Activated B cell treated with CpG ODN at 0.5 μM for 24 hours (primary cell): ENCODE measurements at regions of chr1 and their contacts with region 1.

Region 1: DNA sequence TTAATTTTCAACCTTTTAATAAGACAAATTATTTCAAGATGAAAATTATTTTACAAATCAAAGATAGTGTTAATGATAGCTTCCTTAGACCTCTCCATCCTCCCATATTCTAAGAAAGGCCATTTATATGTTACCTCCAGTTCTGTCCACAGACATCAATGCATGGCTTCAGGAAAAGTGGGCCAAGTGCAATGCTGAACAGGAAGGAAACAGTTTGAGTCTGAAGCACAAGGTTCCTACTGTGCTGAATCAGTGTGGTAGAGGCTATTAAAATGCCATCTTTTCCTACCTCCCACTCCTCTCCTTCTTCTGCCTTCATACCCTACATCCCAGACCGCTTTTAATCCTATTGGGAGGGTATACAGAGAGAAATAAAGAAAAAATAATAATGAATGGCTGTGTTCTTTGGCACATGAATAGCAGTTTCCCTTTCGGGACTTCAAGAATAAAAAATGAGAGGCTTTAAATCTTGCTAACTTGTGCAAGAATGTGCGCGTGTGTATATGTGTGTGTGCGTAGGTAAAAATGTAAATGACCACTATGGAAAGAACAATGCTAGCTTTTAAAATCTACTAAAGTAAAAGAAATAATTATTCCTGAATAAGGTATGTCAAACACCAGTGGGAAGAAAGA is 62.6 kb upstream of the C1orf105 start:
- DNase-seq: no peak
- ATAC-seq: peak; percentile 10
- H3K4me3 Mint-ChIP-seq: peak overlapping the region; percentile 58
- H3K27ac Mint-ChIP-seq: peak overlapping the region; percentile 91
- H3K4me1 Mint-ChIP-seq: peaks cover 53% of the 10 kb centered on the region
- H3K27me3 Mint-ChIP-seq: no peaks in the 10 kb centered on the region
- CTCF ChIP-seq: no peak

Region 2: GRCh38 chr1:172343240-172344160 is 14.4 kb before region 1 on chr1:
- CTCF ChIA-PET with region 1: interaction called, 12 read pairs
- POLR2A ChIA-PET with region 1: interaction called, 49 read pairs
- intact Hi-C with region 1: loop called (anchors 1 kb)
- DNase-seq: no peak
- ATAC-seq: peak; percentile 61
- H3K4me3 Mint-ChIP-seq: peak overlapping the region; percentile 66
- H3K27ac Mint-ChIP-seq: peak overlapping the region; percentile 84
- H3K4me1 Mint-ChIP-seq: peaks cover 69% of the 10 kb centered on the region
- H3K27me3 Mint-ChIP-seq: no peaks in the 10 kb centered on the region
- CTCF ChIP-seq: no peak

Region 3: GRCh38 chr1:172390683-172391551 is 33.0 kb after region 1 on chr1:
- CTCF ChIA-PET with region 1: interaction called, 12 read pairs
- POLR2A ChIA-PET with region 1: interaction called, 119 read pairs
- intact Hi-C with region 1: loop called (anchors 1 kb)
- DNase-seq: peak; percentile 36
- ATAC-seq: peak; percentile 76
- H3K4me3 Mint-ChIP-seq: peak overlapping the region; percentile 88
- H3K27ac Mint-ChIP-seq: peak overlapping the region; percentile 99
- H3K4me1 Mint-ChIP-seq: peaks cover 64% of the 10 kb centered on the region
- H3K27me3 Mint-ChIP-seq: no peaks in the 10 kb centered on the region
- CTCF ChIP-seq: no peak